ENCODE measurements at regions of chr4 and their contacts with region 1.

Region 1: GRCh38 chr4:102620697-102621497 is 119.7 kb downstream of the NFKB1 start:
- DNase-seq: no peak
- H3K4me3 ChIP-seq: no peak overlapping the region
- H3K27ac ChIP-seq: no peak overlapping the region
- H3K4me1 ChIP-seq: no peaks in the 10 kb centered on the region
- H3K27me3 ChIP-seq: no peaks in the 10 kb centered on the region
- CTCF ChIP-seq: peak in 2 of 3 donors; percentile 26 to 50
- EP300 ChIP-seq: no peak
- POLR2A ChIP-seq: no peak

Region 2: GRCh38 chr4:103008875-103009729 is 388.2 kb after region 1 on chr4:
- intact Hi-C with region 1: loop called (anchors 10 kb)
- DNase-seq: no peak
- H3K4me3 ChIP-seq: no peak overlapping the region
- H3K27ac ChIP-seq: no peak overlapping the region
- H3K4me1 ChIP-seq: peaks cover 5% of the 10 kb centered on the region
- H3K27me3 ChIP-seq: no peaks in the 10 kb centered on the region
- CTCF ChIP-seq: peak; percentile 29 to 55 (median 50)
- EP300 ChIP-seq: no peak
- POLR2A ChIP-seq: no peak

Region 3: GRCh38 chr4:103019308-103020124 is 398.6 kb after region 1 on chr4 and contains the start of gene SLC9B1:
- intact Hi-C with region 1: loop called in 3 of 4 experiments (anchors 10 kb)
- DNase-seq: peak; percentile 97 to 98 (median 97)
- H3K4me3 ChIP-seq: peak within 1 kb of the TSS; percentile 50
- H3K27ac ChIP-seq: peak within 1 kb of the TSS; percentile 71 to 90
- H3K4me1 ChIP-seq: peaks cover 2% of the 10 kb centered on the region
- H3K27me3 ChIP-seq: no peaks in the 10 kb centered on the region
- CTCF ChIP-seq: peak in 1 of 3 donors; percentile 15
- EP300 ChIP-seq: peak; percentile 89
- POLR2A ChIP-seq: peak; percentile 94
- total RNA-seq, gene SLC9B1: 0.83 to 3.8 (median 2.5) TPM

Region 4: DNA sequence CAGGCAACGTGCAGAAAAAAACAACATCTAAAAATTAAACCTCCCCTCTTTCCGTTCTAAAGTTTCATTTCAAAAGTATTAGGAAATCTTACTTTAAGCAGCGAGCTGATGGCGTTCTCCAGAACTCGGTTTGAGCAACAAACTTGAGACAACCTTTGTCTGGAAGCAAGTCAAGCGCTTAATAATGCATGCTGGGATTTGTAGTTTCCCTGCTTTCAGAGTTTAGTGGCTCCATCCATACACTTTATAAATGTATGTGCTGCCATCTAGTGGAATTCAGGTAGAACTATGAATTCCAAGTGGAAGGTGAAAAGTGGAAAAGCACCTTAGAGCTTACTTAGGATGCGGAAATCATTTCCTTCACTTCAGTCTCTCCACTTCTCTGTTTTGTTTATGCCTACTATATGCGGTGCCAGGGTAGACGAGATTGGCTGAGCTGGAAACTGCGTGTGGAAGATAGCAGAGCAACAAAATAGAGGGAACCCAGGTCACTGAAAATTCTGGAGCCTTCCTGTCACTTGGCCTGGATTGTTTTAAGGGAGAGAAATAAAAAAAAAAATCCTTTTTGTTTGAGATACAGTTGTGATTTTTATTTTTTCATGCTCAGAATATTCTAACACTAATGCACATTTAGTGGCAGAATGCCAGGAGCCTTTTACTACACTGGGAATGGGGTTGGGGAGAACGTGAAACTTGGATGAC is 478.9 kb after region 1 on chr4 and contains the start of gene BDH2:
- intact Hi-C with region 1: loop called in 3 of 4 experiments (anchors 10 kb)
- DNase-seq: peak in 4 of 5 donors; percentile 30 to 73 (median 38)
- H3K4me3 ChIP-seq: peak within 1 kb of the TSS; percentile 33
- H3K27ac ChIP-seq: peak within 1 kb of the TSS; percentile 17 to 46
- H3K4me1 ChIP-seq: peaks cover 16% of the 10 kb centered on the region
- H3K27me3 ChIP-seq: no peaks in the 10 kb centered on the region
- CTCF ChIP-seq: peak; percentile 55 to 86 (median 80)
- EP300 ChIP-seq: no peak
- POLR2A ChIP-seq: peak; percentile 15
- total RNA-seq, gene BDH2: 42.2 to 92.6 (median 65.9) TPM

Measured in ovary (tissue), 10 donors.